ENCODE measurements at regions of chr20 and their contacts with region 1.

Region 1: GRCh38 chr20:36908603-36909002 is 32.7 kb downstream of the TLDC2 start:
- DNase-seq: no peak
- ATAC-seq: no peak
- H3K4me3 Mint-ChIP-seq: no peak overlapping the region
- H3K27ac Mint-ChIP-seq: no peak overlapping the region
- H3K4me1 Mint-ChIP-seq: peaks cover 18% of the 10 kb centered on the region
- H3K27me3 Mint-ChIP-seq: no peaks in the 10 kb centered on the region

Region 2: GRCh38 chr20:36895036-36895435 is 13.6 kb before region 1 on chr20:
- CTCF ChIA-PET with region 1: no interaction called
- DNase-seq: no peak
- ATAC-seq: no peak
- H3K4me3 Mint-ChIP-seq: no peak overlapping the region
- H3K27ac Mint-ChIP-seq: peak overlapping the region; percentile 71
- H3K4me1 Mint-ChIP-seq: peaks cover 9% of the 10 kb centered on the region
- H3K27me3 Mint-ChIP-seq: no peaks in the 10 kb centered on the region

Region 3: GRCh38 chr20:36919715-36920333 is 11.2 kb after region 1 on chr20:
- CTCF ChIA-PET with region 1: interaction called, 15 read pairs
- DNase-seq: no peak
- ATAC-seq: peak; percentile 66
- H3K4me3 Mint-ChIP-seq: no peak overlapping the region
- H3K27ac Mint-ChIP-seq: peak overlapping the region; percentile 39
- H3K4me1 Mint-ChIP-seq: peaks cover 7% of the 10 kb centered on the region
- H3K27me3 Mint-ChIP-seq: no peaks in the 10 kb centered on the region

Region 4: GRCh38 chr20:37123441-37123840 is 214.8 kb after region 1 on chr20:
- CTCF ChIA-PET with region 1: no interaction called
- DNase-seq: no peak
- ATAC-seq: no peak
- H3K4me3 Mint-ChIP-seq: no peak overlapping the region
- H3K27ac Mint-ChIP-seq: no peak overlapping the region
- H3K4me1 Mint-ChIP-seq: no peaks in the 10 kb centered on the region
- H3K27me3 Mint-ChIP-seq: peaks cover 1% of the 10 kb centered on the region

Measured in activated CD8-positive, alpha-beta memory T cell treated with anti-CD3 and anti-CD28 coated beads, Interleukin-2, amount 10 ng/mL, durations not matched to agents 7 days and 5 days (primary cell).